Mammary epithelial cell (primary cell): ENCODE measurements at regions of chr3 and their contacts with region 1.

Region 1: GRCh38 chr3:153111016-153111415 is 51.0 kb upstream of the RAP2B start:
- DNase-seq: no peak
- H3K4me3 ChIP-seq: no peak overlapping the region
- H3K27ac ChIP-seq: no peak overlapping the region
- H3K4me1 ChIP-seq: no peaks in the 10 kb centered on the region
- H3K27me3 ChIP-seq: no peaks in the 10 kb centered on the region
- CTCF ChIP-seq: no peak

Region 2: GRCh38 chr3:153078826-153079225 is 32.2 kb before region 1 on chr3:
- CTCF ChIA-PET with region 1: no interaction called
- dilution Hi-C with region 1: loop called (anchors 5 kb)
- in situ Hi-C with region 1: no loop called
- intact Hi-C with region 1: no loop called
- DNase-seq: no peak
- H3K4me3 ChIP-seq: no peak overlapping the region
- H3K27ac ChIP-seq: no peak overlapping the region
- H3K4me1 ChIP-seq: no peaks in the 10 kb centered on the region
- H3K27me3 ChIP-seq: no peaks in the 10 kb centered on the region
- CTCF ChIP-seq: no peak